ENCODE measurements at regions of chr16 and their contacts with region 1.

Region 1: GRCh38 chr16:52068447-52069074 is 478.4 kb downstream of the TOX3 start:
- DNase-seq: peak; percentile 10
- ATAC-seq: no peak
- H3K4me3 ChIP-seq: no peak overlapping the region
- H3K27ac ChIP-seq: no peak overlapping the region
- H3K4me1 ChIP-seq: no peaks in the 10 kb centered on the region
- H3K27me3 ChIP-seq: no peaks in the 10 kb centered on the region
- CTCF ChIP-seq: peak; percentile 18; the same call in 1 of the 2 replicates
- POLR2A ChIP-seq: no peak
- RAD21 ChIP-seq: peak; percentile 16; the same call in 1 of the 2 replicates

Region 2: DNA sequence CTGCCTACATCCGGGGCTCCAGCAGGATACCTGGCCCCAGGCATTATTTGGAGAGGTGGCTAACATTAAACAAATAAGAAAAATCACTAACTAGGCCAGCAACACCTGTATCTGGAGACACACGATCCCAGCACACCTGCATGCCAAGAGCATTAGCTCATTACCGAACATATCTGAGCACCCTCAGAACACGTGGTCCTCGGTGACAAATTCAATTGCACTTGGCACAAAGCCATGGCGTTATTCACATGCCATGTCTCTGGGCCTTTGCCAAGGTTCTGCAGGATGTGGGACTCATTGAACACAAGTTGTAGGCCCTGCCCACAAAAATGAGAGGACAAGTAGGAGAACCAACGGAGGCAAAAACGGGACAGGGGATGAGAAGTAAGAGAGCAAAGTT is 74.0 kb before region 1 on chr16:
- CTCF ChIA-PET with region 1: no interaction called
- POLR2A ChIA-PET with region 1: no interaction called
- dilution Hi-C with region 1: no loop called
- in situ Hi-C with region 1: no loop called
- intact Hi-C with region 1: no loop called
- DNase-seq: no peak
- ATAC-seq: no peak
- H3K4me3 ChIP-seq: no peak overlapping the region
- H3K27ac ChIP-seq: no peak overlapping the region
- H3K4me1 ChIP-seq: no peaks in the 10 kb centered on the region
- H3K27me3 ChIP-seq: peaks cover 2% of the 10 kb centered on the region; the same call in 1 of the 2 replicates
- CTCF ChIP-seq: no peak
- POLR2A ChIP-seq: no peak
- RAD21 ChIP-seq: no peak

Region 3: GRCh38 chr16:52912565-52913173 is 844.1 kb after region 1 on chr16:
- CTCF ChIA-PET with region 1: no interaction called
- POLR2A ChIA-PET with region 1: no interaction called
- dilution Hi-C with region 1: no loop called
- in situ Hi-C with region 1: no loop called
- intact Hi-C with region 1: loop called (anchors 5 kb)
- DNase-seq: peak; percentile 49
- ATAC-seq: peak; percentile 54; the same call in 1 of the 2 replicates
- H3K4me3 ChIP-seq: no peak overlapping the region
- H3K27ac ChIP-seq: no peak overlapping the region
- H3K4me1 ChIP-seq: no peaks in the 10 kb centered on the region
- H3K27me3 ChIP-seq: no peaks in the 10 kb centered on the region
- CTCF ChIP-seq: peak; percentile 68
- POLR2A ChIP-seq: no peak
- RAD21 ChIP-seq: peak; percentile 65

Region 4: GRCh38 chr16:53022374-53022773 is 953.8 kb after region 1 on chr16:
- CTCF ChIA-PET with region 1: interaction called, 4 read pairs
- POLR2A ChIA-PET with region 1: no interaction called
- dilution Hi-C with region 1: no loop called
- in situ Hi-C with region 1: no loop called
- intact Hi-C with region 1: loop called (anchors 1 kb)
- DNase-seq: peak; percentile 43
- ATAC-seq: peak; percentile 99
- H3K4me3 ChIP-seq: no peak overlapping the region
- H3K27ac ChIP-seq: no peak overlapping the region
- H3K4me1 ChIP-seq: no peaks in the 10 kb centered on the region
- H3K27me3 ChIP-seq: no peaks in the 10 kb centered on the region
- CTCF ChIP-seq: peak; percentile 78
- POLR2A ChIP-seq: no peak
- RAD21 ChIP-seq: peak; percentile 87

Measured in IMR-90 (cell line).